Aorta (tissue), 5 donors: ENCODE measurements at regions of chr12 and their contacts with region 1.

Region 1: GRCh38 chr12:66107451-66107915 is 23.1 kb downstream of the LLPH start:
- DNase-seq: no peak
- ATAC-seq: peak; percentile 92
- H3K4me3 ChIP-seq: no peak overlapping the region
- H3K27ac ChIP-seq: no peak overlapping the region
- H3K4me1 ChIP-seq: no peaks in the 10 kb centered on the region
- H3K27me3 ChIP-seq: no peaks in the 10 kb centered on the region

Region 2: DNA sequence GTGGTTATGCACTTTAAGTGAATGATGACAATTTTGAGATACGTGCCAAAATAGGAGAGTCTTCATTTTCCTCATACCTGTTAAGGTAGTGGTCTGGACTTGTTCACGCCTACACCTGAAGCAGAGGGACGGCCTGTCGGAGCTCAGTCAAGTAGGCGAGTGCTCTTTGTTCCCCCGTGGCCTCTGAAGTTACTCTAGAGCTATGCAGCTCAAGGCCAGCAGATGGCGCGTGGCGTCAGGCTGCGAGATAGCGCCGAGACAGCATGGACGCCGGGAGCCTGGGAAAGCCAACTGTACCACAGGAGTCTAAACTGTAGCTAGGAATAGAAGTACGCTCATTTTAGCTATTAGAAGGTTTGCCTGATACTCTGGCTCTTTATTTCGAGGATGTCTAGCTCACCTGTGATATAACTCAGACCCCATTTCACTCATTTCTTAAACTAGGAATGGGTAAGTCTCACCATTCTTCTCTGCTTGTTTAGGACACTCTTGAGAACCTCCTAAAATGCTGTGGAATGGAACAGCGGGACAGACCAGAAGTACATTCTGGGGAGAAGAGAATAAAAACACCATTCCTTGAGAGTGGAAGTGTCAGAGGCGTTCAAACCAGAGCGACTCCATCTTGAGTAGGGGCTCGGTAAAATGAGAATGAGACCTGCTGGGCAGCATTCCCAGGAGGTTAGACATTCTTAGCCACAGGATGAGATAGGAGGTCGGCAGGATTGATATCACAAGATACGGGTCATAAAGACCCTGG is 550.6 kb before region 1 on chr12:
- intact Hi-C with region 1: loop called in 1 of 2 experiments (anchors 5 kb)
- DNase-seq: peak; percentile 80 to 93
- ATAC-seq: peak; percentile 94
- H3K4me3 ChIP-seq: no peak overlapping the region
- H3K27ac ChIP-seq: no peak overlapping the region
- H3K4me1 ChIP-seq: no peaks in the 10 kb centered on the region
- H3K27me3 ChIP-seq: no peaks in the 10 kb centered on the region

Region 3: DNA sequence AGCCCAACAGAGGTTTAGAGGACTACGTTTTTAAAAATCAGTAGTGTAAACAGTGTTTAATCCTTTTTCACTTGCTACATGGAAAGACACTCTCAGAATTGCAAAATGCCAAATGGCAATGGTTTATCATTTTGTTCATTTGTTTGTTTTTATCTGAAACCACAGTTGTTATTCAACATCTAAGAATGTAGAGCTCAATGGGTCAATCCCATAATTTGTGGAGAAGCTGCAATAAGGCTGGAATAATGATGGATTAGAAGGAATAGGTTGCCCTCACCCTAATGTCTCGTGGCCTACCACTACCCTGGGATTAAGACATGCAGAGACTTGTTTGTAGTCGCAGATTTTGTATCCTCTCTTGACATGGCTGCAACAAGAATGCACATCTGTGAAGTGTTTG is 92.7 kb before region 1 on chr12:
- intact Hi-C with region 1: no loop called
- DNase-seq: no peak
- ATAC-seq: no peak
- H3K4me3 ChIP-seq: no peak overlapping the region
- H3K27ac ChIP-seq: no peak overlapping the region
- H3K4me1 ChIP-seq: no peaks in the 10 kb centered on the region
- H3K27me3 ChIP-seq: no peaks in the 10 kb centered on the region